Calu3 (cell line): ENCODE measurements at regions of chr5 and their contacts with region 1.

Region 1: GRCh38 chr5:55691265-55692105 is 20.6 kb downstream of the SLC38A9 start:
- DNase-seq: no peak
- H3K4me3 Mint-ChIP-seq: no peak overlapping the region
- H3K27ac Mint-ChIP-seq: no peak overlapping the region
- H3K4me1 Mint-ChIP-seq: peaks cover 14% of the 10 kb centered on the region
- H3K27me3 Mint-ChIP-seq: no peaks in the 10 kb centered on the region
- CTCF ChIP-seq: peak; percentile 44

Region 2: DNA sequence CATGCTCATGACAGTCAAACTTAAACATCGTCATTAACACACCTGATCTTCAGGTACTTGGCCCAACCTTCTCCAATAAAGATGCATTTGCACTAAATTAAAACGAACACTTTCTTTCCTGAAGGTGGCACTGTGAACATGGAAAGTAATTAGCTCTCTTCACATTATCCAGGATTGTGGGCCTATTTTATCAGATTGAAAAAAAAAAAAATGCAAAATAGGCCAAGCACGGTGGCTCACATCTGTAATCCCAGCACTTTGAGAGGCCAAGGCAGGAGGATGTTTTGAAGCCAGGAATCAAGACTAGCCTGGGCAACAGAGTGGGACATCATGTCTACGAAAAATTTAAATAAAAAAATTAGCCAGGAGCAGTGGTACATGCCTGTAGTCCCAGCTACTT is 504.1 kb before region 1 on chr5:
- CTCF ChIA-PET with region 1: no interaction called
- intact Hi-C with region 1: loop called (anchors 5 kb)
- DNase-seq: peak; percentile 11
- H3K4me3 Mint-ChIP-seq: no peak overlapping the region
- H3K27ac Mint-ChIP-seq: no peak overlapping the region
- H3K4me1 Mint-ChIP-seq: no peaks in the 10 kb centered on the region
- H3K27me3 Mint-ChIP-seq: peaks cover 24% of the 10 kb centered on the region
- CTCF ChIP-seq: no peak

Region 3: DNA sequence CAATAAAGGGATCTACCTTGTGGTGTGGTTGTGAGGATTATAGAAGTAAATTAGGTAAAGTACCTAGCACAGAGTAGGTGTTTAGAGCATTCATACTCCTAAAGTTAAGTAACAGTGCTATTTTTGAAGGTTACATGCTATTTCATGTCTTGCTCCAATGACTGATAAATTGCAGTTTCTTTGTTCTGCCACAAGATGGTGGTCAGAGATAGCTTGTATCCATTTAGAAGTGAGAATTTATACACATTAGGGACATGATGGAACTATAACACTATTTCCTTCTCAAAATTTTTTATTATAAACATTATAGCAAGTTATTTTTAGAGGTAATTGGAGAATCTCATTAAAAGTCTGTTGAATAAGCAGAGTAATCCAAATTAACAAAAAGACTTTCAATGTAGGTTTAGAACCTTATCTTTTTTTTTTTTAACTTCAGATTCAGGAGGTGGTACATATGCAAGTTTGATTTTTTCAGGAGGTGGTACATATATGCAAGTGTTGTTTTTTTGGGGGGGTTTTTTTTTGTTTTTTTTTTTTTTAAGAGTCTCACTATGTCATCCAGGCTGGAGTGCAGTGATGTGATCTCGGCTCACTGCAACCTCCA is 366.6 kb before region 1 on chr5:
- CTCF ChIA-PET with region 1: interaction called, 5 read pairs
- intact Hi-C with region 1: loop called (anchors 2 kb)
- DNase-seq: no peak
- H3K4me3 Mint-ChIP-seq: no peak overlapping the region
- H3K27ac Mint-ChIP-seq: no peak overlapping the region
- H3K4me1 Mint-ChIP-seq: no peaks in the 10 kb centered on the region
- H3K27me3 Mint-ChIP-seq: no peaks in the 10 kb centered on the region
- CTCF ChIP-seq: peak; percentile 16

Region 4: DNA sequence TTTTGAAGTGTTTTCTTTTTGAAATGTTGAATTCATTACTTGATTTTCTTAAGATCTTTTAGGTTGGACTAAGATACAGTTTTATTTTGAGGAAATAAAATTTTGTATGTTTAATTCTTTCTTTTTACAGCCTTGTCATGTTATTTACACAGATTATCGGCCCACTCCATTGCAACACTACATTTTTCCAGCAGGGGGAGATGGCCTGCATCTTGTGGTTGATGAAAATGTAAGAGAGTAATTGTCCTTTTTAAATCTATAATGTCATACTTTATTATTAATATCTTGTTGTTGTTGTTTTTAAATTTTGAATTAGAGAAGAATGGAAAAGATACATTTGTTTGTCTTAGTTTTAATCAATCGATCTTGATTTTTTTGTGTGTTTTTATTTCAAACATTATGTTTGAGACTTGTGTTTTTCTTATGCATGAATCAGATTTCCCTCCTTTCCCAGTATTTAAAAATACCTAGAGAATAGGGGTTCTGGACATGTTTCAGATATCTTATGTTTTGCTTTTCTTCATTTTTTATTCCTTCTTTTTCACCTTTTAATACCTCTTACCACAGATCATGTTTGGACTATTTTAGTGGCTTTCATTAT is 347.0 kb before region 1 on chr5:
- CTCF ChIA-PET with region 1: no interaction called
- intact Hi-C with region 1: loop called (anchors 1 kb)
- DNase-seq: peak; percentile 71
- H3K4me3 Mint-ChIP-seq: no peak overlapping the region
- H3K27ac Mint-ChIP-seq: peak overlapping the region; percentile 11
- H3K4me1 Mint-ChIP-seq: peaks cover 19% of the 10 kb centered on the region
- H3K27me3 Mint-ChIP-seq: no peaks in the 10 kb centered on the region
- CTCF ChIP-seq: peak; percentile 78

Region 5: DNA sequence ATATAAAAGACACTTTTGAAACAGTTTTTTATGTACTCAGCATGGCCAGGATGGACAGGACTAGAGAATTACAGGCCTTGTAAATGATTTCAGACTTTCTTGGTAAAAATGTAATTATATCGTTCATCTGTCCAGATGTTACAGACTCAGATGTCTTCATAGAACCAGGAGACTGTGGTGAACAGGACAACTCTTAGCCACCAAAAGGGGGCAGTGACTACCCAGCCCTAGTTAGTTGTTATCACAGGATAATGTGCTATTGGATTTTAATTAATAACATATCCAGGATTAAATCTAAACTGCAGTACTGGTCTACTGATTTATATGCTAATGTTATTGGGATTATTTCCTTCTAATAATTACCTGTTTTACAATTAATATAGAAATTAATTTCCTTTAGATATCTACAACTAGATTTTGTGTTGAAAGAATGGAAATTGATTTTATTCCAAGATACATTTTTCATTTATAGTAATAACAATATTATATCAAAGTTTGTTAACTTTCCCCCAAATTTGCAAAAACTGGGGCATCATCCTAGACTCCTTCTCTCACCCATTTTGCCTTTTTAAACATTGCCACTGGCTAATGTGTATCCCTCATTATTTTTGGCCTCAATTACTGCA is 284.3 kb before region 1 on chr5:
- CTCF ChIA-PET with region 1: interaction called, 6 read pairs
- intact Hi-C with region 1: loop called (anchors 1 kb)
- DNase-seq: peak; percentile 22
- H3K4me3 Mint-ChIP-seq: no peak overlapping the region
- H3K27ac Mint-ChIP-seq: no peak overlapping the region
- H3K4me1 Mint-ChIP-seq: peaks cover 15% of the 10 kb centered on the region
- H3K27me3 Mint-ChIP-seq: no peaks in the 10 kb centered on the region
- CTCF ChIP-seq: peak; percentile 22

Region 6: DNA sequence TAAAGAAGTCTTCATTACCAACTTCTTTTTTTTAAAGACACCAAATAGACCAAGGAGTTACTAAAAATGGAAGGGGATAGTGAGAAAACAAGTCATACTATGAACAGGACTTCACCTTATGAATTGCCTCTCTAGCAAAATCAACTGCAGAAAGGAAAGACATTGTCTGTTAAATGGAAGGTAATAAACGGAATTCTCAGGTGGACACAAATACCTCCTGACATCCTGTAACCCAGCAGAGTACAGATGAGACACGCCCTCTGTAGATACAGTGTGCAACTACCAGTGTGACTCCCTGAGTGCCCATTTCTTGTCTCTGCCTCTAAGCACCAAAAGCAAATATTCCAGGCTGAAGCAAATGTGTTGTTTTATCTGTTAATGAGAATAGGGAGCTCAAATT is 144.5 kb before region 1 on chr5:
- CTCF ChIA-PET with region 1: no interaction called
- intact Hi-C with region 1: loop called (anchors 5 kb)
- DNase-seq: peak; percentile 19
- H3K4me3 Mint-ChIP-seq: no peak overlapping the region
- H3K27ac Mint-ChIP-seq: no peak overlapping the region
- H3K4me1 Mint-ChIP-seq: no peaks in the 10 kb centered on the region
- H3K27me3 Mint-ChIP-seq: no peaks in the 10 kb centered on the region
- CTCF ChIP-seq: no peak